ENCODE measurements at regions of chr12 and their contacts with region 1.

Region 1: GRCh38 chr12:53321074-53321814 is at the start of gene AAAS:
- DNase-seq: peak; percentile 86
- ATAC-seq: peak; percentile 85
- H3K4me3 ChIP-seq: peak within 1 kb of the TSS; percentile 82
- H3K27ac ChIP-seq: peak within 1 kb of the TSS; percentile 95
- H3K4me1 ChIP-seq: peaks cover 24% of the 10 kb centered on the region
- H3K27me3 ChIP-seq: no peaks in the 10 kb centered on the region; a peak in 1 of 4 replicates
- CTCF ChIP-seq: peak; percentile 98 to 99 (median 99); a peak in 5 of 6 replicates
- EP300 ChIP-seq: no peak
- POLR2A ChIP-seq: peak; percentile 94
- RAD21 ChIP-seq: peak; percentile 36; the same call in 1 of the 2 replicates
- polyA plus RNA-seq, gene AAAS: 58.6 to 71.5 TPM

Region 2: DNA sequence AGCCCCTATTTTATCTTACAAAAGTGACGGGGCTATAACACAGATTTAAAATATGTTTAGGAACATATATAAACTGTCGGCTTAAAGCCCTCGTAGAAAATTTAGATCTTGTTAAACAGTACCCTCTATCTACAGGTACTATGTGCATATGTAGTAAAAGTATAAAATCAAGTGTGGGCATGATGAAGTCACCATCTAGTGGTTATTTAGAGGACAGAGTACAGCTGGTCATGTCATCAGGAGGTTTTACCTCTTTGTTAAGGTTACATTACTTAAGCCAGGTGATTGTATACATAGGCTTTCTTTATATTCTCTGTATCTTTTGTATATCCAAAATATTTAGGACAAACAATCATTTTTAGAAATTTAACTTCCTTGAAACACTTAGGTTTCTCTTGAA is 289.6 kb before region 1 on chr12:
- CTCF ChIA-PET with region 1: no interaction called
- POLR2A ChIA-PET with region 1: no interaction called
- RAD21 ChIA-PET with region 1: no interaction called
- SMC1A ChIA-PET with region 1: no interaction called
- in situ Hi-C with region 1: no loop called
- intact Hi-C with region 1: no loop called
- DNase-seq: no peak
- ATAC-seq: no peak
- H3K4me3 ChIP-seq: no peak overlapping the region
- H3K27ac ChIP-seq: no peak overlapping the region
- H3K4me1 ChIP-seq: no peaks in the 10 kb centered on the region
- H3K27me3 ChIP-seq: no peaks in the 10 kb centered on the region
- CTCF ChIP-seq: no peak
- EP300 ChIP-seq: no peak
- POLR2A ChIP-seq: no peak
- RAD21 ChIP-seq: no peak

Region 3: GRCh38 chr12:53205747-53206419 is 115.4 kb before region 1 on chr12:
- CTCF ChIA-PET with region 1: interaction called, 87 read pairs
- POLR2A ChIA-PET with region 1: interaction called, 6 read pairs
- RAD21 ChIA-PET with region 1: interaction called, 6 read pairs
- SMC1A ChIA-PET with region 1: interaction called, 10 read pairs
- in situ Hi-C with region 1: no loop called
- intact Hi-C with region 1: no loop called
- DNase-seq: peak; percentile 87
- ATAC-seq: peak; percentile 80
- H3K4me3 ChIP-seq: peak overlapping the region; percentile 90
- H3K27ac ChIP-seq: peak overlapping the region; percentile 86
- H3K4me1 ChIP-seq: peaks cover 54% of the 10 kb centered on the region
- H3K27me3 ChIP-seq: no peaks in the 10 kb centered on the region
- CTCF ChIP-seq: no peak
- EP300 ChIP-seq: peak; percentile 60 to 77; a peak in 2 of 4 replicates
- POLR2A ChIP-seq: peak; percentile 75
- RAD21 ChIP-seq: no peak

Region 4: GRCh38 chr12:53267999-53268647 is 53.1 kb before region 1 on chr12 and contains the start of gene ESPL1:
- CTCF ChIA-PET with region 1: interaction called, 68 read pairs
- POLR2A ChIA-PET with region 1: interaction called, 17 read pairs
- RAD21 ChIA-PET with region 1: interaction called, 12 read pairs
- SMC1A ChIA-PET with region 1: interaction called, 24 read pairs
- in situ Hi-C with region 1: no loop called
- intact Hi-C with region 1: no loop called
- DNase-seq: peak; percentile 58
- ATAC-seq: peak; percentile 93
- H3K4me3 ChIP-seq: peak within 1 kb of the TSS; percentile 77
- H3K27ac ChIP-seq: peak within 1 kb of the TSS; percentile 89
- H3K4me1 ChIP-seq: peaks cover 14% of the 10 kb centered on the region
- H3K27me3 ChIP-seq: no peaks in the 10 kb centered on the region
- CTCF ChIP-seq: peak; percentile 26 to 37 (median 33); a peak in 4 of 6 replicates
- EP300 ChIP-seq: no peak
- POLR2A ChIP-seq: peak; percentile 75
- RAD21 ChIP-seq: peak; percentile 47
- polyA plus RNA-seq, gene ESPL1: 2.1 to 2.2 TPM

Region 5: GRCh38 chr12:53344824-53345485 is 23.7 kb after region 1 on chr12:
- CTCF ChIA-PET with region 1: interaction called, 240 read pairs
- POLR2A ChIA-PET with region 1: interaction called, 41 read pairs
- RAD21 ChIA-PET with region 1: interaction called, 118 read pairs
- SMC1A ChIA-PET with region 1: interaction called, 123 read pairs
- in situ Hi-C with region 1: no loop called
- intact Hi-C with region 1: loop called (anchors 1 kb)
- DNase-seq: no peak
- ATAC-seq: peak; percentile 95
- H3K4me3 ChIP-seq: peak overlapping the region; percentile 80
- H3K27ac ChIP-seq: no peak overlapping the region
- H3K4me1 ChIP-seq: peaks cover 5% of the 10 kb centered on the region
- H3K27me3 ChIP-seq: peaks cover 0 to 5% of the 10 kb centered on the region in 2 experiments; a peak in 1 of 4 replicates
- CTCF ChIP-seq: peak; percentile 68 to 90 (median 87)
- EP300 ChIP-seq: no peak
- POLR2A ChIP-seq: 0 out of 2 replicates have a peak, but pooled peaks have one; percentile 32
- RAD21 ChIP-seq: peak; percentile 81

Region 6: GRCh38 chr12:53414756-53415417 is 93.6 kb after region 1 on chr12:
- CTCF ChIA-PET with region 1: interaction called, 13 read pairs
- POLR2A ChIA-PET with region 1: interaction called, 5 read pairs
- RAD21 ChIA-PET with region 1: interaction called, 6 read pairs
- SMC1A ChIA-PET with region 1: interaction called, 6 read pairs
- in situ Hi-C with region 1: no loop called
- intact Hi-C with region 1: no loop called
- DNase-seq: no peak
- ATAC-seq: no peak
- H3K4me3 ChIP-seq: no peak overlapping the region
- H3K27ac ChIP-seq: no peak overlapping the region
- H3K4me1 ChIP-seq: peaks cover 18% of the 10 kb centered on the region
- H3K27me3 ChIP-seq: no peaks in the 10 kb centered on the region
- CTCF ChIP-seq: no peak
- EP300 ChIP-seq: no peak
- POLR2A ChIP-seq: no peak
- RAD21 ChIP-seq: no peak

Region 7: GRCh38 chr12:53500776-53501614 is 179.8 kb after region 1 on chr12 and contains the start of gene TARBP2:
- CTCF ChIA-PET with region 1: interaction called, 9 read pairs
- POLR2A ChIA-PET with region 1: interaction called, 11 read pairs
- RAD21 ChIA-PET with region 1: interaction called, 13 read pairs
- SMC1A ChIA-PET with region 1: interaction called, 11 read pairs
- in situ Hi-C with region 1: no loop called
- intact Hi-C with region 1: no loop called
- DNase-seq: peak; percentile 98
- ATAC-seq: peak; percentile 84
- H3K4me3 ChIP-seq: peak within 1 kb of the TSS; percentile 76
- H3K27ac ChIP-seq: peak within 1 kb of the TSS; percentile 95
- H3K4me1 ChIP-seq: peaks cover 13% of the 10 kb centered on the region
- H3K27me3 ChIP-seq: no peaks in the 10 kb centered on the region
- CTCF ChIP-seq: no peak
- EP300 ChIP-seq: peak in 1 of 2 experiments; percentile 38; a peak in 1 of 4 replicates
- POLR2A ChIP-seq: peak; percentile 94
- RAD21 ChIP-seq: no peak
- polyA plus RNA-seq, gene TARBP2: 5.5 to 9.4 TPM